Colonic mucosa (tissue), 4 donors: ENCODE measurements at regions of chr16 and their contacts with region 1.

Region 1: GRCh38 chr16:4330277-4330874 is 14.5 kb downstream of the GLIS2 start:
- DNase-seq: peak; percentile 84
- H3K4me3 ChIP-seq: no peak overlapping the region
- H3K27ac ChIP-seq: no peak overlapping the region
- H3K4me1 ChIP-seq: peaks cover 4% of the 10 kb centered on the region
- H3K27me3 ChIP-seq: peaks cover 8% of the 10 kb centered on the region
- CTCF ChIP-seq: peak; percentile 97

Region 2: DNA sequence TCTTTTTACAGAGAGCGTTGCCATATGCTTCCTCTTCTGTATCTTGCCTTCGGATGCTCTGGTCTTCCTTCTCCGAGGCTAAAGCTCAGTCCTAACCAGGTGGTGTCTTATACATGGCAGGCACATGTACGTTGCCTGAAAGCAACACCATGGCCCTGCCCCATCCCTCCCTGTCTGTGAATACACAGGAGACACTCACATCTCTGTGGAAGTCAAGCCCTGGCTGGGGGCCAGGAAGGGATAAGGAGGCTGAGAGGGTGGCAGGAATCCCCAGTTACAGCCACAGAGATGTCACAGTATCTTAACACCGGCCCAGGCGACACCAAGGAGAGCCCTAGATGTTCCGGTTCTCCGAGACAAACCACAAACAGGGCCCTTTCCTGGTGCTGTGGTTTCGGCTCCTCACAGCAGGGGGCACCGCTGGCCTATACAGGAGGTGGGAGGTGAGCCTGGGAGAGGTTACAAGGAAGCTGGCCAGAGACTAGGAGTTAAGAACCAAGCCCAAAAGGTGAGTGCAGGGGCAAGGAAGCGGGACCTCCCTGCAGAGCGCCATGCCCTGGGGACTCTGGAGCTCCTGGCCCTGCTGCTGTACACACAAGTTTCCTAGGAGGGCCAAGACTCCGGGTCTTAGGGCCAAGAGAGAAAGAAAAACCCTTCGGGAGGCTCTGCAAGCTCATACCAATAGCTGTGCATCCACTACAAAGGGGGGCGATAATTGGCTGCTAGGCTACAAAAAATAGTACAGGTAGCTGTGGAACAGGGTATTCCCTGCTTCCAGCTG is 130.2 kb before region 1 on chr16:
- intact Hi-C with region 1: loop called (anchors 2 kb)
- DNase-seq: peak; percentile 84
- H3K4me3 ChIP-seq: no peak overlapping the region
- H3K27ac ChIP-seq: no peak overlapping the region
- H3K4me1 ChIP-seq: no peaks in the 10 kb centered on the region
- H3K27me3 ChIP-seq: no peaks in the 10 kb centered on the region
- CTCF ChIP-seq: peak; percentile 64

Region 3: DNA sequence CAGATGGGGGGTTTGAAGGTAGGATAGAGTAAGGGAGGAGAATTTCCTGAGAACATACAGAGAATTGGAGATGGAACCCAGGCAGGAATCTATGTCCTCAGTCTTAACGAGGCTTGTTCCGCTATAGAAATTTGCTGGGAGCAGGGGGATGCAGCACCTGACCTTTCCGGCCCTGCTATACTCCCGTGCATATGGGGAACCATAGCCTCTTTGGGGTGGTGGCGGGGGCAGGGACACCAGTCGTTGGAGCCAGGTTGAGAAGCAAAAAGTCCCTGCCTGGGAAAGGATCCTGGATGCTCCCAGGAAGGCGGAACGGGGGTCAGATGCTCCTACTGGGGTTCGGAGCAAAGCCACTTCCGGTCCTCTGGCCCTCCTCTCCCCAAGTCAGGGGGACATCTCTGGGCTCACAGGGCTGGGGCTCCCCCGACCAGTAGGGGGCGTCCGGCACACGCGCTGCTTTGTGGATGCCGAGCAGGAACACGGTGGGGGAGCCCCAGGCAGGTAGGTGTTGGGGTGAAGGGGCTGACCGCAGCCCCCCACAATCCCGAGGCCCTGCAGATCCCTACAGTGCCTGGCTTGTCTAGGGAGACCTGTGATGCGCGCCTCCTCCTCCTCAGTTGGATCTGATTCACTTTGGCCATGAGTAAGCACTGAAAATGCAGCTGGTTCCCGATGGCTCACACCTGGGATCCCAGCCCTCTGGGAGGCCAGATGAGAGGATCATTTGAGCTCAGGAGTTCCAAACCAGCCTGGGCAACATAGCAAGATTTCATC is 42.0 kb before region 1 on chr16:
- intact Hi-C with region 1: loop called (anchors 2 kb)
- DNase-seq: peak; percentile 86
- H3K4me3 ChIP-seq: no peak overlapping the region
- H3K27ac ChIP-seq: no peak overlapping the region
- H3K4me1 ChIP-seq: peaks cover 5% of the 10 kb centered on the region
- H3K27me3 ChIP-seq: no peaks in the 10 kb centered on the region
- CTCF ChIP-seq: peak; percentile 94

Region 4: DNA sequence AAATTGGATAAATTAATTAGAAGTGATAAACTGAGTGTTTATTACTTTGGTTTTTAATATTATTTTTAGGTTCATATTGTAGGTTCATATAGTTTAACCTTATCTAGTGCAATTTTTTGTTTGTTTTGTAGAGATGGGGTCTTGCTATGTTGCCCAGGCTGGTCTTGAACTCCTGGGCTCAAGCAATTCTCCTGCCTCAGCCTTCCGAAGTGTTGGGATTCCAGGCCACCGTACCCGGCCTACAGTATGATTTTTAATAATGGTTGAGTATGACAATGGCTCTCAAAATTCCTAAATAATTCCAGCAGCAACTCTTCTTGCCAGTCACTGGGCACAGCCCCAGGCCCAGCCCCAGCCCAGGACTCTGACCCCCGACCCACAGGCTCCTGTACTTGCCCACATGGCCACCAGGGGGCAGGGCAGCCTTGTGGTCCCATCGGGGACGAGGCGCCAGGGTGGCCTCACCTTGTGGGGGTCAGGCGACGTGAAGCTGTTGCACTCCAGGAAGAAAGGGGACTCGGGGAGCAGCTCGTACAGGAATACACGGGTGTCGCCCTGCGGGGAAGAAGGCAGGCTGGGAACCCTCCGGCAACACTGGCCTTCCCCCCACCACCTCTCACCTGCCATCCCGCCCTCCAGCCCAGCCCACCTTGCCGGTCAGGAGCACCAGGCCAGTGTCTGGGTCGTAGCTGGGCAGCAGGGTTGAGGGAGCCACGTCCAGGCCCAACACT is 28.6 kb after region 1 on chr16:
- intact Hi-C with region 1: no loop called
- DNase-seq: peak; percentile 56
- H3K4me3 ChIP-seq: no peak overlapping the region
- H3K27ac ChIP-seq: no peak overlapping the region
- H3K4me1 ChIP-seq: no peaks in the 10 kb centered on the region
- H3K27me3 ChIP-seq: no peaks in the 10 kb centered on the region
- CTCF ChIP-seq: peak; percentile 92